ENCODE measurements at regions of chr12 and their contacts with region 1.

Region 1: DNA sequence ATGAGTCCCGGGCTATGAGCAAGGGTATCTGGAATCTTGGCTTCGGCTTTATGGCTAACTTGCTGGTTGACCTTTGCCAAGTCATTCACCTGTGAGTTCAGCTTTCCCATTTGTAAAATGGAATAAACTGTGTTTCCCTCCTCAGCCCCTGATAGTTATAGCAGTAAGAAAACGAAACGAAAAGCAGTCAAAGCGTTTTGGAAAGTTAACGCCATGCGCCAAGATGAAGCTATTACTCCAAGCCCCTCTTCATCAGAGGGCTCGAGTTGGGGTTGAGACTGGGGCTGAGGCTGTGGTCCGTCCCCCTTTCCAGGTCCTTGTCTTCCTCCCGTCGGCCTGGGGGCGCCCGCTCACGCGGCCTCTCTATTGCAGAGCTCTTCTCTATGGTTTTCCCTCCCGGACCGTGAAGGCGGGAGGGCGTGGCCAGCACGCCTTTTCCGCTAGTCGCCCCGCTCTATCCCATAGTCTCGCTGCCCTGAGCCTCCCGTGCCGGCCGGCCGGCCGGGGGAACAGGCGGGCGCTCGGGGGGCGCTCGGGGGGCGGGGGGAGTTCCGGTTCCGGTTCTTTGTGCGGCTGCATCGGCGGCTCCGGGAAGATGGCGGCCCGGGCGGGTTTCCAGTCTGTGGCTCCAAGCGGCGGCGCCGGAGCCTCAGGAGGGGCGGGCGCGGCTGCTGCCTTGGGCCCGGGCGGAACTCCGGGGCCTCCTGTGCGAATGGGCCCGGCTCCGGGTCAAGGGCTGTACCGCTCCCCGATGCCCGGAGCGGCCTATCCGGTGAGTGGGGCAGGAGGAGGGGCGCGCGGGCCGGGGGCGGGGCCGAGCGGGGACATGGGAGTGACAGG is at the start of gene SMARCD1:
- DNase-seq: peak; percentile 48
- H3K4me3 ChIP-seq: peak within 1 kb of the TSS; percentile 62
- H3K27me3 ChIP-seq: no peaks in the 10 kb centered on the region; the same call in 1 of the 2 replicates
- CTCF ChIP-seq: peak; percentile 78
- polyA plus RNA-seq, gene SMARCD1: 48.9 and 56.0 TPM in 2 replicates

Region 2: DNA sequence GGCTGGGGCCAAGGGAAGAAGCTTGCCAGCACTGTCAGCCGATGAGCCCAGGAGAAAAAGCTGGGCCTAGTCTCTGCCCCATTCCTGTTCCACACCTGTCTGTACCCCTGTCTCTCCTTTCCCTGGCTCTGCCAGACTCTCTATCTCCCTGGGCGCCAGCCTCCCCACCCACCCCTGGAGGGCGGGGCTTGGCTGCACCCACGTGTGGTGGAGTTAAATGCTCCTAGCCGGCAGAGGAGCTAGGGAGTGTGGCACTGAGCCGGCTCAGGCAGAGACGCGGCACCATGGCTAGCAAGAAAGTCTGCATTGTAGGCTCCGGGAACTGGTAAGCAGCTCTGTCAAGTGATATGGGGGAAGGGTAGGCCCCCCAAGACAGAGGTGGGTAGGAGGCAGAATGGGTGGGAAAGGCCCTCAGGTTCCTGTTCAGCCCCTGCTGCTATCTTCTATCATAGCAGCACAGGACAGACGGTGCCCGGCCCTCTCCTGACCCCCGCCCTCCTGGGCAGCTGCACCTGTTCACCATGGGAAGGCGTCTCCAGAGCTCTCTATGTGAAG is 18.8 kb after region 1 on chr12 and contains the start of gene GPD1:
- CTCF ChIA-PET with region 1: interaction called, 58 read pairs
- POLR2A ChIA-PET with region 1: interaction called, 4 read pairs
- DNase-seq: no peak
- H3K4me3 ChIP-seq: no peak within 1 kb of the TSS
- H3K27me3 ChIP-seq: no peaks in the 10 kb centered on the region
- CTCF ChIP-seq: no peak
- polyA plus RNA-seq, gene GPD1: 0.31 and 0.47 TPM in 2 replicates

Region 3: GRCh38 chr12:50174971-50175715 is 90.1 kb after region 1 on chr12:
- CTCF ChIA-PET with region 1: interaction called, 15 read pairs
- POLR2A ChIA-PET with region 1: no interaction called
- DNase-seq: no peak
- H3K4me3 ChIP-seq: no peak overlapping the region
- H3K27me3 ChIP-seq: no peaks in the 10 kb centered on the region
- CTCF ChIP-seq: peak; percentile 51